Transverse colon (tissue), 4 donors: ENCODE measurements at regions of chr15 and their contacts with region 1.

Region 1: DNA sequence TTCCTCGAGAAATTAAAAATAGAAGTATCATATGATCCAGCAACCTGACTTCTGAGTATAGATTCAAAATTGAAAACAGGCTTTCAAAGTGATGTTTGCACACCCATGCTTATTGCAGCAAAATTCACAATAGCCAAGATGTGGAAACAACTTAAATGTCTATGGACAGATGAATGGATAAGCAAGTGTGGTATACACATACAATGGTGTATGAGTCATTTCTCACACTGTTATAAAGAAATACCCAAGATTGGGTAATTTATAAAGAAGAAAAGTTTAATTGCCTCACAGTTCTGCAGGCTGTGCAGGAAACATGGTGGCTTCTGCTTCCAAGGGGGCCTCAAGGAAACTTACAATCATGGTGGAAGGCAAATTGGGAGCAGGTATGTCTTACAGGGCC is 100.8 kb downstream of the KLF13 start:
- DNase-seq: no peak
- H3K4me3 ChIP-seq: no peak overlapping the region
- H3K27ac ChIP-seq: no peak overlapping the region
- H3K4me1 ChIP-seq: no peaks in the 10 kb centered on the region
- H3K27me3 ChIP-seq: no peaks in the 10 kb centered on the region
- CTCF ChIP-seq: no peak
- EP300 ChIP-seq: no peak
- POLR2A ChIP-seq: no peak

Region 2: DNA sequence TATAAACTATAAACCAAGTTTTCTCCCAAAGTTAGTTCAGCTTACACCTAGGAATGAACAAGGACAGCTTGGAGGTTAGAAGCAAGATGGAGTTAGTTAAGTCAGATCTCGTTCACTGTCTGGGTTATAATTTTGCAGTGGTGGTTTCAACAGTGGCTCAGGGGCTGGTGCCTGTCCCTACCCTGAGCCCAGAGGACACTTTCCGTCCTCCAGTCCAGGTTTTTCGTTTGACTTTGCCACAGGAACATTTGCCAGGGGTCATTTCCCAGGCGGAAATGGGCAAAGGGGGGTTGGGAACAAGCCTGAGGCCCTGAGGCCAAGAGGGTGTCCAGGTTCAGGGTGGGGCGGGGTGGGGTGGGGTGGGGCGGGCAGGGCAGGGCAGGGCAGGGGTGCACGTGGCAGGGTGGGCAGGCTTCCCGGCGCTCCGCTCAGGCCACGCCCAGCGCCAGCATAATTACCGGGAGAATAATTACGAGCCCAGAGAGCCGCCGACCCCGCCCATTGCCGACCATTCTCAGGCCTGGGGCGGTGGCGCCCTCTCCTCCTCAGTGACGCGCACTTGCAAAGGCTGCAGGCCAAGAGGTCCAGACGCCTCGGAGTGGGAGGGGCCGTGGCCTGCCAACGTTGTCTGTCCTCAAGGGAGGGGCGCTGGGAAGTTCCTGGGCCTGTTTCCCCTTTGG is 30.4 kb before region 1 on chr15:
- in situ Hi-C with region 1: no loop called
- intact Hi-C with region 1: loop called (anchors 2 kb)
- DNase-seq: peak; percentile 97
- H3K4me3 ChIP-seq: peak overlapping the region in 1 of 4 donors; percentile 15
- H3K27ac ChIP-seq: peak overlapping the region; percentile 74 to 82 (median 79)
- H3K4me1 ChIP-seq: peaks cover 11 to 45% (median 29%) of the 10 kb centered on the region in 4 donors
- H3K27me3 ChIP-seq: no peaks in the 10 kb centered on the region
- CTCF ChIP-seq: no peak
- EP300 ChIP-seq: peak; percentile 32
- POLR2A ChIP-seq: no peak

Region 3: DNA sequence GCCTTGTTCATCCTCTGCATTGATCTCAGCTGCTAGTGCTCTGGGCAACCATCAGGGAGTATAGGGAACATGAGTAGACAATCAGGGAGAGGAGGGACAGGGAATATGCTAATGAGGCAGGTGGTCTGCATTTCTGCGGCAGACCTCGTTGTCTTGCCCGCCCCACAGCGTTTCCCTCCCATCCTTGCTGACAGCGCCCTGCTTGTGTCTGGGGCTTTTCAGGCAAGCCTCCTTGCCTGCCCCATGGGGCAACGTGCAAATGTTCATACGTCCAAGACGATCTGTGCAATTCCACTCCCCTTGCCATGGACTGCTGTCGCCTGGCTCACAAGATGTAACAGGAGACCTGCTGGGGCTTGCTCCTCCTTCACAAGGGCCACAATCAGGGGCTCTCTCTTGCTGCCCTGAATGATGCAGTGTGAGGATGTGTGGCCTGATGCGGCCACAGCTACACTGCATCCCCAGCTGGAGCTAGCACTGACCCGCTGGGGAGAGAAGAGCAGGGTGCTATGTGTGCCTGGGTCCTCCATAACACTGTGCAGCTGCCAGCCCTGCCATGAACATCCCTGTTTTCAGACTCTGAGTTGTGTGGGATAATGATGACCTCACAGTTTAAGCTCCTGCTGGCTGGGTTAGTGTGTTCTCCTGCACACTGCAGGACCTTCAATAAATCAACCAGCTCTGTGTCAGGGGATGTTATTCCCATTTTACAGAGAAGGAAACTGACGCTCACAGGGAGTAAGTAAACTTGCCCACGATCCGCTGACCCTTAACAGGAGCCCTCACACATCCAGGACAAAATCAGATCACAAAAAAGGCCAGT is 110.6 kb after region 1 on chr15:
- in situ Hi-C with region 1: no loop called
- intact Hi-C with region 1: no loop called
- DNase-seq: no peak
- H3K4me3 ChIP-seq: no peak overlapping the region
- H3K27ac ChIP-seq: no peak overlapping the region
- H3K4me1 ChIP-seq: no peaks in the 10 kb centered on the region
- H3K27me3 ChIP-seq: no peaks in the 10 kb centered on the region
- CTCF ChIP-seq: no peak
- EP300 ChIP-seq: no peak
- POLR2A ChIP-seq: no peak

Region 4: GRCh38 chr15:31893780-31894179 is 466.4 kb after region 1 on chr15:
- in situ Hi-C with region 1: no loop called
- intact Hi-C with region 1: no loop called
- DNase-seq: no peak
- H3K4me3 ChIP-seq: no peak overlapping the region
- H3K27ac ChIP-seq: no peak overlapping the region
- H3K4me1 ChIP-seq: no peaks in the 10 kb centered on the region
- H3K27me3 ChIP-seq: no peaks in the 10 kb centered on the region
- CTCF ChIP-seq: no peak
- EP300 ChIP-seq: no peak
- POLR2A ChIP-seq: no peak